Upper lobe of right lung (tissue), 1 donor: ENCODE measurements at regions of chr6 and their contacts with region 1.

Region 1: DNA sequence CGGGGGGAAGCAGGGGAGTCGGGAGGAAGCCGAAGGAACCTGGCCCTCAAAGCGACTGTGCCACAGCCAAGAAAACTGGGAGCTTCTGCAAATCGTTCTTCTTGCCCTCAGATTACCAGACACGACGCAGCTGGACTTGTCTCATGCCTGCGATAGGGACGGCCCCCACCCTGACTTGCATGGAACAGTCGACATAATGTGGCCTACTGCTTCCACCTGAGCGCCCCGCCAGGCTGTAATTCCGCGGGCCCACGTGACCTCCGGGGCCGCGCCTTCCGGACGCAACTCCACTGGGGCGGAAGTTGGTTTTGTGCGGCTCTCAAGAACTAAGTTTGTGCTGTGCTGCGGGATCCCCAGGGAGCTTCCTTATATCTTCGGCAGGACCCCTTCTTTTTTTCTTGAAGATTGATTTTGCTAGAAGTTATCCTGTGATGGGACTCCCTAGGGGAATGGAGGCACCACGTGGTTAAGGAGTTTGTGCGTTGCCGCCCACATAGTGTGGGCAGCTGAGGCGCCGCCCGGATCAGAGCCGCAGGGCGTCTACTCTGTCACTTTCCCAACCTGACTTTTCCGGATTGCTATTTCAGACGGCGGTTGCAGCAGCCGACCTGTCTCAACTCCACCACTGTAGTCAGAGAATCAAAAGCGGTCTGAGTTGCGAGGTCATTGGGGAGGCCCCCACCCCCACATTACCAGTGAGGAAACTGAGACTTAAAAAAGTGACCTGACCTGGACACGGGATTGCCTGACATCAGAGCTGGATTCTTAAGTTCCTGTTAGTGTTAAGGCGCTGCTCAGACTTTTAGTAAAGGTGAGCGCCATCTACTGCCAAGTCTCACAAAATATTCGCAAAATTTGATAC is 540 bp upstream of the CD164 start:
- DNase-seq: peak; percentile 96
- ATAC-seq: peak; percentile 89
- H3K4me3 ChIP-seq: peak overlapping the region; percentile 93
- H3K27ac ChIP-seq: peak overlapping the region; percentile 99
- H3K4me1 ChIP-seq: peaks cover 48% of the 10 kb centered on the region
- H3K27me3 ChIP-seq: no peaks in the 10 kb centered on the region
- CTCF ChIP-seq: peak; percentile 52

Region 2: DNA sequence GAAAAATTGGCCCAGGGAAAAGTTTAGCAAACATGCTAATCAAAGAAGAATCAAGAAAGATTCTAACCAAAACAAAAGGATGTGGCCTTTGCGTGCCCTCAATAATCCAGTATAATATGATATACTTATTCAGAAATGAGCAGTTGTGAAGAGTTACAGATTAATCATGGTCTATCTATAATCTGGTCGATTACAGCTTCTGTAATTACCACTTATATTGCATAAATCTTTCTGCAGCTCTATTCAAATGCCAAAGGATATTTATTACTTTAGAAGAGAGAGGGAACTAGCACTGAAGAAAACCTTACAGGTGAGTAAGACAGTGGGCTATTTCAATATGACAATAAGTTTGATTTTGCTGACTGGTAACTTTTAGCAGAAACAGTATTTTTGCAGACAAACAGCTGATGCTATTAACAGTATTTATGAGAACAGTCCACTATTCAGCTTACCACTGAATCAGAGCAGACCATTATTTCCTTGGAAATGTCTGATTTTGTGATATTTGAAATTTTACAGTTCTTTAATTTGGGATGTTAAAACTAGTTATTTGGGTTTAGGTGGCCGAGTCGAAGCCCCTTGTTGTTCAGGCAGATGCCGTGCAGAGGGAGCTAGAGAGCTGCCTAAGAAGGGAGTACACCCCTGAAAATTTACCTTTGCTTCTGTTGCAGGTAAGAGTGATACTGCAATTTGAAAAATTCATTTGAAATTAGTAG is 195.2 kb before region 1 on chr6:
- intact Hi-C with region 1: loop called (anchors 10 kb)
- DNase-seq: no peak
- ATAC-seq: peak; percentile 93
- H3K4me3 ChIP-seq: no peak overlapping the region
- H3K27ac ChIP-seq: no peak overlapping the region
- H3K4me1 ChIP-seq: no peaks in the 10 kb centered on the region
- H3K27me3 ChIP-seq: peaks cover 8% of the 10 kb centered on the region
- CTCF ChIP-seq: peak; percentile 95

Region 3: GRCh38 chr6:109747216-109747615 is 364.4 kb after region 1 on chr6:
- intact Hi-C with region 1: no loop called
- DNase-seq: no peak
- ATAC-seq: no peak
- H3K4me3 ChIP-seq: no peak overlapping the region
- H3K27ac ChIP-seq: no peak overlapping the region
- H3K4me1 ChIP-seq: no peaks in the 10 kb centered on the region
- H3K27me3 ChIP-seq: no peaks in the 10 kb centered on the region
- CTCF ChIP-seq: no peak

Region 4: DNA sequence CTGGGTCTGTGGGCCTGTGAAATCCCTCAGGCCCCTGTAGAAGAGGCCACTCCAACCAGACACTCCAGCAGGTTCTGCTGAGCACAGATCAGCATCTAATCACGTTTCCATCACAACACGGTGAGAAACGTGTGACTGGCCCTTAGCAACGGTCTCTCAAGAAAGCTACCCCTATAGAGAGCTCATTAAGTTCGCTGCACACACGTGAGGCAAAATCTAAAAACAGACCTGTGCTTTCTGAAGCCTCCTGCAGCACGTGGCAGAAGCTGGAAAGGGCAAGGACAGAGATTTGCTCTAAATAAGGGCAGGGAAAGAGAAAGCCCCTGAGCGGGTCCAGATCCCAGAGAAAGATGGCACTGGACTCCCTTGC is 651.8 kb after region 1 on chr6:
- intact Hi-C with region 1: no loop called
- DNase-seq: no peak
- ATAC-seq: no peak
- H3K4me3 ChIP-seq: no peak overlapping the region
- H3K27ac ChIP-seq: no peak overlapping the region
- H3K4me1 ChIP-seq: no peaks in the 10 kb centered on the region
- H3K27me3 ChIP-seq: no peaks in the 10 kb centered on the region
- CTCF ChIP-seq: no peak